ENCODE measurements at regions of chr12 and their contacts with region 1.

Region 1: GRCh38 chr12:53098982-53099651 is 1.6 kb downstream of the IGFBP6 start:
- DNase-seq: peak; percentile 81
- H3K4me3 Mint-ChIP-seq: peak overlapping the region; percentile 15
- H3K27ac Mint-ChIP-seq: no peak overlapping the region
- H3K4me1 Mint-ChIP-seq: peaks cover 41% of the 10 kb centered on the region
- H3K27me3 Mint-ChIP-seq: peaks cover 16% of the 10 kb centered on the region

Region 2: GRCh38 chr12:52906774-52907486 is 192.2 kb before region 1 on chr12:
- intact Hi-C with region 1: no loop called
- DNase-seq: no peak
- H3K4me3 Mint-ChIP-seq: no peak overlapping the region
- H3K27ac Mint-ChIP-seq: no peak overlapping the region
- H3K4me1 Mint-ChIP-seq: peaks cover 5% of the 10 kb centered on the region
- H3K27me3 Mint-ChIP-seq: peaks cover 6% of the 10 kb centered on the region

Region 3: DNA sequence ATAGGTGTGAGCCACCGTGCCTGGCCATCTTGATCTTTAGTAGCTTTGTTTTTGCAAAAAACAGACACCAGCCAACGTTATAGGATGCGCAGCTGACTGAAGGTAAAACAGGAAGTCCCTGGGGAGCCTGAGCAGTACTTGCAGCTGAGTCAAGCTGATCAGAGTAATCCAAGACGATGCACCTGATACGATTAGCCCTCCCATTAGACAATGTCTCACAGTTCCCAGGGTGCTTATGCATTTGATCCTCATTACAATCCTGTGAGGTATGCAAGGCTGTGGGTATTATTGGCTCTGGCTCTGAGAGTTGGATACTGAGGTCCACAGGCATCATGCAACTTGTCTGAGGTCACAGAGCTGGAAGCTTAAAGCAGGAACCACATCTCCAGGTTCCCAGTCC is 142.1 kb before region 1 on chr12:
- intact Hi-C with region 1: no loop called
- DNase-seq: no peak
- H3K4me3 Mint-ChIP-seq: no peak overlapping the region
- H3K27ac Mint-ChIP-seq: no peak overlapping the region
- H3K4me1 Mint-ChIP-seq: no peaks in the 10 kb centered on the region
- H3K27me3 Mint-ChIP-seq: peaks cover under 1% of the 10 kb centered on the region

Region 4: DNA sequence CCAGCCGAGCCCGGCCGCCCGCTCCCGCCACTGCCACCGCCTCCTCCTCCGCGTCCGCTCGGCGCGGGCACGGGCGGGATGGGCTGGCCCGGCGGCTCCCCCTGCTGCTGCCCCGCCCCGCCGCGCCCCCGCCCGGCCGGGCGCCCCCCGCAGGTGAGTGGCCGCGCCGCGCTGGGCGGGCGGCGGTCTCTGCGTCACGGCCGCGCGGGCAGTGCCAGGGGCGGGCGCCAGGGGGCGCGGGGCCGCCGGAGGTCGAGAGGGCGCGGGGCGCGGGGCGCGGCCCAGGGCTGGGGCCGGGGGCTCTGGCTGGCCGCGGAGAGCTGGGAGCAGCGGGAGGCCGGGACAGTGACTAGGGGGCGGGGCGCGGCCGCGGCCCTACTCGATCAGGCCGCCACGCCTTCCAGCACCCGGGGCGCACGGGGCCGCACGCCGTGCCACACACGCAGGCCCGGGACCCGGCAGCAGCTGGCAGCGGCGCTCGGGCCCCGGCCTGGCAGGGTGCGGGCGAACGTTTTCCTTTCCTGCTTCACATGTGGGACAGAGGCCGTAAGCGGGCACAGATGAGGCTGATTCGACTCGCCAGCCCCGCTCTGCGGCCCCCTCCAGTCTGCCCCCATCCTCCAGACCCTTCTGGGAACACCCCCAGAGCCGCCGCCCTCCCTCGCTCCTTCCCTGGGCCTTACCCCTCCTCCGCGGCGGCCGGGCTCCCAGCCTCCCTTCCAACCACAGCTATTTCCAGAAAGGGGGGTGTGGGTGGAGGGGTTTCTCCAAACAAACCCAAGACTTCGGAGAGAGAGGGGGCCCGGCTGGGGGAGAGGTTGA is 51.7 kb before region 1 on chr12:
- intact Hi-C with region 1: loop called (anchors 1 kb)
- DNase-seq: peak; percentile 61
- H3K4me3 Mint-ChIP-seq: peak overlapping the region; percentile 52
- H3K27ac Mint-ChIP-seq: peak overlapping the region; percentile 17
- H3K4me1 Mint-ChIP-seq: peaks cover 19% of the 10 kb centered on the region
- H3K27me3 Mint-ChIP-seq: peaks cover 2% of the 10 kb centered on the region

Region 5: DNA sequence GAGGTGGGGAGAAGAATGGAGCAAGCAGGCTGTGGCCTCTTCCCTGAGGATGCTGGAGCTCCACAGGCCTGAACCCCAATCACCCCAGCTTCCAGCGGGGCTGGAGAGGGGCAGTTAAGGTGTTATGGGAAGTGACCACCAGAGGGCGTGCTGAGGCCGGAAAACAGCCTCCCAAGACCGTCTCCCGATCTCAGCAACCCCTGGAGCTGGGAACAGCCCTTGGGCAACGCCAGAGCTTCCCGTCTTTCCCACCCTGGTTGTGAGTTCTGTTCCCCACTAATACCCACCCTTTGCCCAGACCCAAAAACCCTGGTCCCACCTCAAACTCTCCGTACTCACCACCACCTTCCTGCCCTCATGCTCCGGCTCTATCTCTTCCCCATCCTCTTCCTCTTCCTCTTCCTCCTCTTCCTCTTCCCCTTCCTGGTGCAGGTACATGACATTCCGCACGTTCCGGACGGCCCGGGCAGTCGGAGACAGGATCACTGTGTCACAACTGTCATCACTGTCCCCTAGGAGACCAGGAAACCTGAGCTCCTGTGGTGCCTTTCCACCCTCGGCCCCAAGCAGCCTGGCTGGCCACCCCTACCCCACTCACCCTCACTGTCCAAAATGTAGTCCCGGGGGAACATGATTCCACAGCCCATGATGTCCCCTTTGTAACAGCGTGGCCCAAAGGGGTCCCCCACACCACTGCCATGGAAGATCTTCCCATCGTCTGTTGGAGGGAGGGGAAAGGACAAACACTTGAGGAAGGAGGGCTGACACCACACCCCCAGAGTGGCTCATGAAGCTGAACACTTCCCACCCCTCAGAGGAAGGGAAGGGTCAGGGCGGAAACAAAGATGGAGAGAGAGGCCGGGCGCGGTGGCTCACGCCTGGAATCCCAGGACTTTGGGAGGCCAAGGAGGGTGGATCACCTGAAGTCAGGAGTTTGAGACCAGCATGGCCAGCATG is 32.9 kb before region 1 on chr12:
- intact Hi-C with region 1: loop called (anchors 1 kb)
- DNase-seq: peak; percentile 51
- H3K4me3 Mint-ChIP-seq: no peak overlapping the region
- H3K27ac Mint-ChIP-seq: no peak overlapping the region
- H3K4me1 Mint-ChIP-seq: peaks cover 3% of the 10 kb centered on the region
- H3K27me3 Mint-ChIP-seq: no peaks in the 10 kb centered on the region

Region 6: GRCh38 chr12:53129170-53129569 is 30.1 kb after region 1 on chr12:
- intact Hi-C with region 1: no loop called
- DNase-seq: no peak
- H3K4me3 Mint-ChIP-seq: no peak overlapping the region
- H3K27ac Mint-ChIP-seq: no peak overlapping the region
- H3K4me1 Mint-ChIP-seq: no peaks in the 10 kb centered on the region
- H3K27me3 Mint-ChIP-seq: peaks cover 14% of the 10 kb centered on the region